WTC11 (cell line): ENCODE measurements at regions of chr16 and their contacts with region 1.

Region 1: DNA sequence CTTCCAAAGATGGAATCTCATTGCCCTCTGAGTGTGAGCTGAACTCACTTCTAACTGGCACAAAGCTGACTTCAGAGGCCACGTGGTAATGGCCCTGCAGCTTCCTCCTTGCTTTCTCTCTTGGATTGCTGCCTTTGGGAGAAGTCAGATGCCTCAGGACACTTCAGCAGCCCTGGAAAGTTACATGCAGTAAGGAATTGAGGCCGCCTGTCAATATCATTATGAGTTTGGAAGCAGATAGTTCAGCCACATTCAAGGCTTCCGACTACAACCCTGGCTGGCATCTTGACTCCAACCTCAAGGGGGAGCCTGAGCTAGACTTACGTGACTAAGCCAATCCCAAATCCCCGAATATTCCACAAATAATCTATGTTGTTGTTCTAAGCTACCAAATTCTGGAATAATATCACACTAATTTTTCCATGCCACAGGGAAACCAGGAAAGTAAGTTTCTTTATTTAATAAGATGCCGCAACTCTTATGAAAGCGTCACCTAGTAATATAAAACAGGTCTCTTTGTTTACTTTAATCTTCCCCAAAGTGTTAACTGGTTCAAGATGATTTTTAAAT is 13.6 kb downstream of the CEP20 start:
- DNase-seq: peak; percentile 58
- ATAC-seq: peak; percentile 79
- H3K4me3 Mint-ChIP-seq: no peak overlapping the region
- H3K27ac Mint-ChIP-seq: peak overlapping the region; percentile 55
- H3K4me1 Mint-ChIP-seq: no peaks in the 10 kb centered on the region
- H3K27me3 Mint-ChIP-seq: no peaks in the 10 kb centered on the region
- CTCF ChIP-seq: peak; percentile 31; the same call in 1 of the 2 replicates

Region 2: GRCh38 chr16:15829460-15829859 is 45.4 kb before region 1 on chr16:
- CTCF ChIA-PET with region 1: no interaction called
- POLR2A ChIA-PET with region 1: no interaction called
- DNase-seq: peak; percentile 21
- ATAC-seq: peak; percentile 70
- H3K4me3 Mint-ChIP-seq: no peak overlapping the region
- H3K27ac Mint-ChIP-seq: no peak overlapping the region
- H3K4me1 Mint-ChIP-seq: no peaks in the 10 kb centered on the region
- H3K27me3 Mint-ChIP-seq: no peaks in the 10 kb centered on the region
- CTCF ChIP-seq: no peak

Region 3: DNA sequence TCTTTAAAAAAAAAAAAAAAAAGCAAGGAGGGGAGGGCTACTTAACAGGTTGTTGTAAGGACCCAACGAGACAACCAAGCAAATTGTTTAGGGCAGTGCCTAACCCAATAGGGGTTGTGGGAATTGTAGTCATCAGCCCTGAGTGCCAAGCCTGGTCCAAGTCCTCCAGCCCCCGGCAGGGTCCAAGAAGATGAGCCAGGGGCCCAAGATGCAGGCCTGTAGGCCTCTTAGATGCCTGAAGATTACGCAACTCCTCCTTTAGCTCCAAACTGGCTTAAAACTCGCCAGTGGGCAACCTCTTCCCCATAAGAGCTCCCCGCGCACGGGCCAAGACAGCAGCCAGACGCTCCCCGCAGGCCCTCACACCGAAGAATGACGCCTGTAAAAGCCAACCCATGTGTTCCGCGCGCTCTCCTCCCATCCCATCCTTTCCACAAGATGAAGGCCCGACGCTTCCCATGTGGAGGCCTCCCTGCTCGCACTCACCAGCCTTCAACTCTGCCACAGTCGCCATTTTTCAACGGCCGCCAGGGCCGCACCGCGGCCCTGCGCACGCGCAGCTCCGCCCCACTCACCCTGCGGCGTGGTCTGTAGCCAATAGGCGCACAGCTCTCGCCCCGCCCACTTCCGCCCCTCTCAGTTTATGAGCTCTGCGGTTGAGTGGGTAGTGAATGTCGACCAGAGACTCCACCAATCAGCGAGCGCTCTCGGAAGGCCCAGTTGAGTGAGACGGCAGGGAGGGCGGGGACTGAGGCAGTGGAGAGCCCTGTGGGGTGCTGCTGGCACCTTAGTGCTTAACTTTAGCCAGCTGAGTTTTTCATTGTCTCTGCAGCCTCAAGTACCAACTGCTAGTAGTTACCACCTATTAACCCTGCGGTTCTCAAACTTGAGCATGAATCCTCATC is 13.5 kb after region 1 on chr16 and contains the start of gene CEP20:
- CTCF ChIA-PET with region 1: interaction called, 44 read pairs
- POLR2A ChIA-PET with region 1: interaction called, 5 read pairs
- DNase-seq: peak; percentile 100
- ATAC-seq: peak; percentile 99
- H3K4me3 Mint-ChIP-seq: peak within 1 kb of the TSS; percentile 100
- H3K27ac Mint-ChIP-seq: peak within 1 kb of the TSS; percentile 96
- H3K4me1 Mint-ChIP-seq: peaks cover 14% of the 10 kb centered on the region
- H3K27me3 Mint-ChIP-seq: no peaks in the 10 kb centered on the region
- CTCF ChIP-seq: no peak
- total RNA-seq, gene CEP20: 35.7 to 39.5 TPM (median 39.1 TPM) in 3 replicates

Region 4: DNA sequence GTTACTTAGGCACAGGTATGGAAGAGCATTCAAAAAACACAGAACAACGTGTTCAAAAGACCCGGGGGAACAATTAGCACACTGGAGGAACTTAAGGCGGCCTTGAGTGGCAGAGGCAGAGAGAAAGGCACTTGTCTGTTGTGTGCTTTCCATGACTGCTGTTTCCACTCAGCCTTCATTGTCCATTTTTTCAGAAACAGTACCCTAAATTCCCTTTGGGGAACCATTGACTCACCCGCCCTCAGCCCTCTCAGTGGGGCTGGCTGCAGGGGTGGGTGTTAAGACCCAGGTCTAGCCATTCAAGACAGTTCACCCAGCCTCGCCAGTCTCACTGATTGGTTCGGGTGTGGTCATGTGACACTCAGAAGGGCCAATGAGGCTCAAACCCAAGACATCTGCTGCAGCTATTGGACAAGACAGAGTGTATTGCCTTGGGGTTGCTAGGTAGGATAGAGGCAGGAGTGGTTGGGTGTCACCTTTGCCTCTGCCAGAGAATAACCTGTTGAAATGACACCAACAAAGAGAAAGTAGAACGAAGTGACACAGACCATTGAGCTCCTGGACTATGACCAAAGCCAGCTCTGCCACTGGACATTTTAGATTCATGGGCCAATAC is 33.1 kb after region 1 on chr16:
- CTCF ChIA-PET with region 1: no interaction called
- POLR2A ChIA-PET with region 1: no interaction called
- DNase-seq: peak; percentile 81
- ATAC-seq: peak; percentile 100
- H3K4me3 Mint-ChIP-seq: no peak overlapping the region
- H3K27ac Mint-ChIP-seq: 0 out of 2 replicates have a peak overlapping the region, but pooled peaks have one; percentile 18
- H3K4me1 Mint-ChIP-seq: peaks cover 8% of the 10 kb centered on the region
- H3K27me3 Mint-ChIP-seq: peaks cover 2% of the 10 kb centered on the region; the same call in 1 of the 2 replicates
- CTCF ChIP-seq: no peak

Region 5: DNA sequence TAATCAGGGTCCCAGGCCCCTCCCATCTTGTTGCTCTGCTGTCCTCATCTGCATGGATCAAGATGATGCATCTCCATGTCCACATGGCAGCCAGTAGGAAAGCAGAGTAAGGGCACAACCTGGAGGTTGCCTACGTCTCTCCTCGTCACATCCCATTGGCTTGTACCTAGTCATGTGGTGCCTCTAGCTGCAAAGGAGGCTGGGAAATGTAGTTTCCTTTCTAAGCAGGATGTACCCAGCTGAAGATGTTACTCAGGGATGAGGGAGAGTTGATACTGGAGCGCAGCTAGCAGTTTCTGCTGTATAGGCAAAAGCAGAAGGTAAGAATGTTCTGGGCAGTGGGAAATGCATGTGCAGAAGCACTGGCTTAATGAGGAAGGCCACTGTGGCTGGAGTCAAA is 95.4 kb after region 1 on chr16:
- CTCF ChIA-PET with region 1: interaction called, 10 read pairs
- POLR2A ChIA-PET with region 1: no interaction called
- DNase-seq: peak; percentile 56
- ATAC-seq: peak; percentile 76
- H3K4me3 Mint-ChIP-seq: peak overlapping the region; percentile 59
- H3K27ac Mint-ChIP-seq: peak overlapping the region; percentile 99
- H3K4me1 Mint-ChIP-seq: peaks cover 66% of the 10 kb centered on the region
- H3K27me3 Mint-ChIP-seq: no peaks in the 10 kb centered on the region
- CTCF ChIP-seq: no peak